ENCODE measurements at regions of chr2 and their contacts with region 1.

Region 1: DNA sequence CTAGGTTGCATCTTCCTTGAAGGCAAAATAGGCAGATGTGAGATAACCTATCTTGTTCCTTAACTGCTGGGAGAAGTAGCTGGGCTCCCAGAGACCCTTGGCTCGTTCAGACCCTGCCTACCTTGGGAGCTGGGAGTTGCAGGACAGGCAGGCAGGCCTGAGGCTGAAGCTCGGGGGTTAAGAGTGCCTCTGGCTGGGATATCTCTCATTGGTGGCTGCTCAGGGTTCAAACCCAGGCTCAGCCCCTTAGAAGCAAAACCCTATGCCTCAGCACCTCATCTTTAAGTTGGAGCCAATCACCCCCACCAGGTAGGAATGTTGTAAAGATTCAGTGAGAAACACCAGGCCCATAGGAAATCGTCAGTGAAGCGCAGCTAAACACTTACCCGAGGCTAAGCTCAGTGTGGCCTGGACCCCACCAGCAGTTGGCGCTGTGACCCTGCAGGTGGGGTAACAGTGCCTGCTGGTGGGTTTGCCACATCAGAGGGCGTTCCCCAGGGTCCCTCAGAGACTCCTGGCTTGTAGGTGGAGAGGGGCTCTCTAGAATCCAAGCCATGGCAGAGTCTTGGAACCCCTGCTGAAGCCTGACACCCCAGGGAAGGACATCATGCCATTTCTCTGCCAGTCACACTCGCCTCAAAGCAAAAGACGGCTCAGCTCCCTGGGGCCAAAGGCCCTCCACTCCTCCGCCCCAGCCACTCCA is 54.6 kb upstream of the GPR17 start:
- DNase-seq: peak; percentile 51 to 87 (median 70)
- ATAC-seq: peak; percentile 99 to 100
- H3K4me3 Mint-ChIP-seq: no peak overlapping the region
- H3K27ac Mint-ChIP-seq: peak overlapping the region in 7 of 10 donors; percentile 11 to 87 (median 35)
- H3K4me1 Mint-ChIP-seq: peaks cover 0 to 13% (median under 1%) of the 10 kb centered on the region in 4 donors
- H3K27me3 Mint-ChIP-seq: no peaks in the 10 kb centered on the region

Region 2: DNA sequence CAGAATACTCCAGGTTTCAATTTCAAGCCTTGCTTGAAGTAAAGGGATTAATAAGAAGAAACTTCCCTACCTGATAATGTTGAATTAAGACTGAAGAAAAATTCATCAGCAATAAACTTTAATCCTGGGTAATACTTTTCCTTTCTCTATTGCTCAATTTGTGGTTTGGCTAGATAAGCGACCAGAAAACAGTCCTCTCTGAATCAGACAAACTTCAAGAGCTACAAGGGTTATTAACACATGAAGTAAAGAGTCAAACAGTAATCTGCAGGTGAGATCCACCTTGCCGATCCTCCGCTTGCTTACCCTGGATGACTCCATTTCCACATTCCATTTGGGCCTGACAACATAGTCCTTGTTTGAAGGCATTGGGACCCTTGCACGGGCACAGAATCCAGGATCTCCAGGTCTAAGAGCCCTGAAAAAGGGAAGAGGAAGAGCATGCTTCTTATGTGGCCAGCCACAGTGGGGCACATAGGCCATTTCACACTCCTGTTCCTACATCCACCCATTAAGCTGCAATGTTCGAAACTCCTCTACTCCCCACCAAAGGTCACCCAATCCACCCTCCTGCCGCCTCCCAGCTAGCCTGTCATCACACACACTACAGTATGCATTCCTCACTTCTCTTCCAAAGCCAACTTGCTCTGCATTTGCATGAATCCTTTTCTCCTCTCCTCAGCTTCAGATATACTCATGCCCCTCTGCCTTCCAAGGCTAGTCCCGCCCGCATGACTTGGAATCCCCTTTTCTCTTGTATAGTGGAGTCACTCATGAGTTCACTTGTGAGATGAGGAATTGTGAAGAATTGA is 104.9 kb before region 1 on chr2:
- POLR2A ChIA-PET with region 1: no interaction called
- DNase-seq: no peak
- ATAC-seq: no peak
- H3K4me3 Mint-ChIP-seq: peak overlapping the region in 8 of 10 donors; percentile 11 to 74 (median 58)
- H3K27ac Mint-ChIP-seq: peak overlapping the region; percentile 76 to 95 (median 87)
- H3K4me1 Mint-ChIP-seq: peaks cover 22 to 45% (median 36%) of the 10 kb centered on the region in 4 donors
- H3K27me3 Mint-ChIP-seq: no peaks in the 10 kb centered on the region

Region 3: DNA sequence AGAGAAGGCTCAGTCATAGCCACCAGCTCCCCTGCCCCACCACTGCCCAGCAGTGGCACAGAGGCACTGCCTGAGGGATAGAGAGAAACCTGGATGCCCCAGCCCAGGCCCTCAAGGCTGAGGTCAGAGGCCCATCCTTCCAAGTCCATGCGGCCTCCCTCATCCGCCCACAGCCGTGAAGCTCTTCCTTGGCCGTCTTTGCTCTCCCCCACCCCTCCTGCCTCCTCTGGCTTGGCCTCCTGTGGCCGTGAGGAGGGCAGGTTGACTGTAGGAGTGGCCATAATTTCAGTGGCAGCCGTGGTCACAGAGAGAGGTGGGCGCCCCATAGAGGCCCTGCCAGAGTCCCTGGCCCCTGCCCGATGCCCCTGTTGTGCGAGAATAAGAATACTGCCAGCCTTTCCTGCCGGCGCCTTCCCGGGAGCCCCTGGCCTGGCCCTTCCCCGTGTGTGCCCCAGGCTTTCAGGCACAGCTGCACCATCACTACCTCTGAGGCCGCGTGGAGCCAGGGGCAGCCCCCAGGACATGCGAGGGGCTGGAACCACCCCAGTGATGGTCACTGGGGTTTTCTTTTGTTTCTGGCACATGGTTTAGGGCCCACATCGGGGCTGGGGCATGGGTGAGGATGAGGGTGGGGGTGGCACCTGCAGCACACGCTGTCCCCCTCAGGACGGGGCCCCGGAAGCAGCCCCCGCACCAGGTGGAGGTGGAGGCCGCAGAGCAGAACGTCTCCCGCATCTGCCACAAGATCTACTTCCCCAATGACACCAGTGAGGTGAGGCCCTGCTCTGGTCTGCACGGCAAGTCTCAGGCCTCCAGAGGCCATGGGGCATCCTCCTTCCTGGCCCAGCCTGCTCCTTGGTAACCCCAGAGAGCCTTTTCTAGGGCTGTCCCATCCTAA is 41.5 kb after region 1 on chr2:
- POLR2A ChIA-PET with region 1: no interaction called
- DNase-seq: peak in 2 of 10 donors; percentile 15 to 20
- ATAC-seq: peak; percentile 57 to 68
- H3K4me3 Mint-ChIP-seq: peak overlapping the region in 7 of 10 donors; percentile 6 to 64 (median 41)
- H3K27ac Mint-ChIP-seq: peak overlapping the region in 9 of 10 donors; percentile 19 to 85 (median 46)
- H3K4me1 Mint-ChIP-seq: peaks cover 15 to 64% (median 49%) of the 10 kb centered on the region in 4 donors
- H3K27me3 Mint-ChIP-seq: no peaks in the 10 kb centered on the region

Region 4: DNA sequence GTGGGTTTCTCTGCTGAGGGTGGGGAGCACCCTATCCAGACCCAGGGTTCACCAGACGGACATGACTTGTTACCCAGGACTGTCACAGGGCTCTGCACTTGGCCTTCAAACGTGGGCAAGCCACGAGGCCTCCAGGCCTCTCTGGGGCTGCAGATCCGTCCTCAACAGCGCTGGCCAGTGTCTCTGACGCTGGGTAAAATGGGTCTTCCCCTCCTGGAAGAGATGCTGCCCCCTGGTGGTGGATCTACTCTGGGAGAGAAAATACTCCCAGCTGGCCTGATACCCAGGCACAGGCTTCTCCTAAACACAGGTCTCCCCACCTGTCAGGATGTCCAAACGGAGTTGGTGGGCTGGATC is 58.3 kb after region 1 on chr2:
- POLR2A ChIA-PET with region 1: interaction called, 12 read pairs
- DNase-seq: peak; percentile 68 to 93 (median 80)
- ATAC-seq: peak; percentile 77 to 94
- H3K4me3 Mint-ChIP-seq: peak overlapping the region; percentile 53 to 83 (median 70)
- H3K27ac Mint-ChIP-seq: peak overlapping the region; percentile 43 to 90 (median 77)
- H3K4me1 Mint-ChIP-seq: peaks cover 12 to 43% (median 32%) of the 10 kb centered on the region in 4 donors
- H3K27me3 Mint-ChIP-seq: no peaks in the 10 kb centered on the region

Measured in naive thymus-derived CD8-positive, alpha-beta T cell (primary cell).